GM12878 (cell line): ENCODE measurements at regions of chr12 and their contacts with region 1.

Region 1: GRCh38 chr12:68831272-68831671 is 23.3 kb downstream of the MDM2 start:
- DNase-seq: no peak
- ATAC-seq: peak; percentile 7; the same call in 2 of the 3 replicates
- H3K4me3 ChIP-seq: no peak overlapping the region
- H3K27ac ChIP-seq: no peak overlapping the region
- H3K4me1 ChIP-seq: no peaks in the 10 kb centered on the region
- H3K27me3 ChIP-seq: no peaks in the 10 kb centered on the region
- CTCF ChIP-seq: no peak
- EP300 ChIP-seq: no peak
- POLR2A ChIP-seq: peak; percentile 63
- RAD21 ChIP-seq: no peak

Region 2: GRCh38 chr12:68580911-68581310 is 250.4 kb before region 1 on chr12:
- CTCF ChIA-PET with region 1: no interaction called
- POLR2A ChIA-PET with region 1: no interaction called
- RAD21 ChIA-PET with region 1: no interaction called
- SMC1A ChIA-PET with region 1: no interaction called
- in situ Hi-C with region 1: no loop called
- intact Hi-C with region 1: no loop called
- DNase-seq: no peak
- ATAC-seq: no peak
- H3K4me3 ChIP-seq: no peak overlapping the region
- H3K27ac ChIP-seq: no peak overlapping the region
- H3K4me1 ChIP-seq: no peaks in the 10 kb centered on the region
- H3K27me3 ChIP-seq: no peaks in the 10 kb centered on the region
- CTCF ChIP-seq: no peak
- EP300 ChIP-seq: no peak
- POLR2A ChIP-seq: no peak
- RAD21 ChIP-seq: no peak

Region 3: DNA sequence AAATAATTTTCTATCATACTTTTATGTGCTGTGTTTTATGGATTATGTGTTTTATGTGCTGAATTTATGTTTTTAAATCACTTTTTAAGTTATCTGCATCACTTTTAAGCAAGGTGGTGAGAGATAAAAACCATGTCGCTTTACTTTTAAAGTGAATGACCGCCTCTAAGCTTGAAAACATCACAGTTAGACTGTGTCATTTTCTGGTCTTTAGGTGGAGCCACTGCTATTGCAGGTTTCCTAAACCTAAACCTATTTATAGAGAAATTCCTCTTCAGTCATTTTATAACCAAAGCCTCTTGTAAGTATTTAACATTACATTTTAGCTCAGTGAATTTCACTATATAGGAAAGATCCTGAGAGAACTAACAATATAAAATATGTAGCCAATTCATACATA is 44.3 kb before region 1 on chr12:
- CTCF ChIA-PET with region 1: interaction called, 12 read pairs
- POLR2A ChIA-PET with region 1: interaction called, 7 read pairs
- RAD21 ChIA-PET with region 1: no interaction called
- SMC1A ChIA-PET with region 1: no interaction called
- in situ Hi-C with region 1: no loop called
- intact Hi-C with region 1: no loop called
- DNase-seq: no peak
- ATAC-seq: peak; percentile 31; the same call in 2 of the 3 replicates
- H3K4me3 ChIP-seq: no peak overlapping the region
- H3K27ac ChIP-seq: peak overlapping the region; percentile 49; the same call in 1 of the 2 replicates
- H3K4me1 ChIP-seq: no peaks in the 10 kb centered on the region; the same call in 1 of the 2 replicates
- H3K27me3 ChIP-seq: no peaks in the 10 kb centered on the region
- CTCF ChIP-seq: no peak; a peak in 1 of 6 replicates
- EP300 ChIP-seq: no peak
- POLR2A ChIP-seq: no peak
- RAD21 ChIP-seq: no peak

Region 4: GRCh38 chr12:68844788-68845695 is 13.8 kb after region 1 on chr12:
- CTCF ChIA-PET with region 1: interaction called, 16 read pairs
- POLR2A ChIA-PET with region 1: no interaction called
- RAD21 ChIA-PET with region 1: no interaction called
- SMC1A ChIA-PET with region 1: interaction called, 15 read pairs
- in situ Hi-C with region 1: no loop called
- intact Hi-C with region 1: no loop called
- DNase-seq: no peak
- ATAC-seq: peak; percentile 20
- H3K4me3 ChIP-seq: no peak overlapping the region
- H3K27ac ChIP-seq: no peak overlapping the region
- H3K4me1 ChIP-seq: no peaks in the 10 kb centered on the region
- H3K27me3 ChIP-seq: no peaks in the 10 kb centered on the region
- CTCF ChIP-seq: no peak
- EP300 ChIP-seq: no peak
- POLR2A ChIP-seq: no peak
- RAD21 ChIP-seq: no peak

Region 5: DNA sequence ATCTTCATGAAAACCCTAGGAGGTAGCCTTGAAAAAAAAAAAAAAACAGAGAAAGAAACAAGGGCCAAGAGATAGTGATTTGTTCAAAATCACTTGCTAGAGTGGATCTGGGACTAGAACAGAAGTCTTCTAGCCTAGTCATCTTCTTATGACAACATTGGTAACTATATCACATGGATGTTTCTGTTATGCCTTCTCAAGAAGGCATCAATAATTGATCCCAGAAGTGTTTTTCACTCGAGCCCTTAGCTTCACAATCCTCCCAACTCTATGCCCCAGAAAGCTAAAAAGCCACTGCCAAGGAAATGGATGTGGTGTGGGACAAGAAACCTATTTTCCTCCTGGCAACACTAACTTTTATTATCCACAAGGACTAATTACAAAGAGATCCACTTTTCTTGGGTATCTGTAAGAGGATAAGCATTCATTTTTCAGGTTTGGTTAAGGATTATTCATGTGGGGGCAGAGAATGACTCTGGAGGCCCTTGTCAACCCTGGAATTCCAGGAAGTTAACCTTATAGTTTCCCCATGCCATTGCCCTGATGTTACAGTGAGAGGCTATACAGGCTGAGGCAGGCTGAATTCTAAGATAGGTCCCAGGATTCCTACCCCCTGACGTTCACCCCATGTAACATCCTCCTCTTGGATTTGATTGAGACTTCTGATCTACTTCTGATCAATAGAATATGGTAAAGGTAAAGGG is 169.4 kb after region 1 on chr12:
- CTCF ChIA-PET with region 1: no interaction called
- POLR2A ChIA-PET with region 1: no interaction called
- RAD21 ChIA-PET with region 1: no interaction called
- SMC1A ChIA-PET with region 1: no interaction called
- in situ Hi-C with region 1: no loop called
- intact Hi-C with region 1: no loop called
- DNase-seq: no peak
- ATAC-seq: no peak
- H3K4me3 ChIP-seq: no peak overlapping the region
- H3K27ac ChIP-seq: no peak overlapping the region
- H3K4me1 ChIP-seq: no peaks in the 10 kb centered on the region
- H3K27me3 ChIP-seq: no peaks in the 10 kb centered on the region
- CTCF ChIP-seq: no peak
- EP300 ChIP-seq: no peak
- POLR2A ChIP-seq: no peak
- RAD21 ChIP-seq: no peak

Region 6: DNA sequence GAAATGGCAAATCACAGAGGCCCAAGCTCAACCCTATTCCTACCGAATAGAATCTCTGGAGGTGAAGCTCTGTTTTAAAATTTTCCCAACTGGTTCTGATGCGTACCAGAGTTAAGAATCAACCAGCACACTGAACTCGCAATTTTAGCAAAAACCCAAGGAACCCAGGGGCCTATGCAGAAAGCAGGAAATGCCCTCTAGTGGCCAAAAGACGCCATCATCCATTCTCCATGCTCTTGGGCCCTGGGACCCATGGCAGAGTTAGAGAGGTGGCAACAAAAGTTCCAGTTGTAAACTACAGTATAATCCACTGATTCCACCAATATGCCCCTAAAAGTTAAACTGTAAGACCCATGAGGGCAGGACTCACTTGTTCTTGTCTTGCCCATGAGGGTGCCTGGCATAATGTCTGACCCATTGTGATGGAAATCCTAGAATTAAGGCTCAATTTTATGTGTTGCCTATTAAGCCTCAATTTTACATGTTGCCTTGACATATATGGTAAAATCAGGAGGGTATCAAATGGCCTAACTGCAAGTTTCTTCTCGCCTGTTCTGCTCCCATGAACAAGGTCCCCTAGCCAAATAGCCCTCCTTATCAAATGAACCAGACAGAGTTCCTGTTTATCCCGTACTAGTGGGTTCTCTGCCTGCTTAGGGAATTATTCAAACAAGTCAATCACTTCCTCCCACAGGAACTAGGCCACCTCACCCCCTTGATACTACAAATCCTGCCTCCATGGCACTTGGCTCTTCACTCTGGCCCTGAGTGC is 239.2 kb after region 1 on chr12:
- CTCF ChIA-PET with region 1: interaction called, 15 read pairs
- POLR2A ChIA-PET with region 1: no interaction called
- RAD21 ChIA-PET with region 1: interaction called, 3 read pairs
- SMC1A ChIA-PET with region 1: interaction called, 16 read pairs
- in situ Hi-C with region 1: no loop called
- intact Hi-C with region 1: no loop called
- DNase-seq: no peak
- ATAC-seq: peak; percentile 98
- H3K4me3 ChIP-seq: no peak overlapping the region
- H3K27ac ChIP-seq: no peak overlapping the region
- H3K4me1 ChIP-seq: no peaks in the 10 kb centered on the region
- H3K27me3 ChIP-seq: peaks cover 0 to 3% of the 10 kb centered on the region in 2 experiments; a peak in 1 of 4 replicates
- CTCF ChIP-seq: peak; percentile 93 to 95 (median 94)
- EP300 ChIP-seq: no peak
- POLR2A ChIP-seq: no peak
- RAD21 ChIP-seq: peak; percentile 92